ENCODE measurements at regions of chr16 and their contacts with region 1.

Region 1: DNA sequence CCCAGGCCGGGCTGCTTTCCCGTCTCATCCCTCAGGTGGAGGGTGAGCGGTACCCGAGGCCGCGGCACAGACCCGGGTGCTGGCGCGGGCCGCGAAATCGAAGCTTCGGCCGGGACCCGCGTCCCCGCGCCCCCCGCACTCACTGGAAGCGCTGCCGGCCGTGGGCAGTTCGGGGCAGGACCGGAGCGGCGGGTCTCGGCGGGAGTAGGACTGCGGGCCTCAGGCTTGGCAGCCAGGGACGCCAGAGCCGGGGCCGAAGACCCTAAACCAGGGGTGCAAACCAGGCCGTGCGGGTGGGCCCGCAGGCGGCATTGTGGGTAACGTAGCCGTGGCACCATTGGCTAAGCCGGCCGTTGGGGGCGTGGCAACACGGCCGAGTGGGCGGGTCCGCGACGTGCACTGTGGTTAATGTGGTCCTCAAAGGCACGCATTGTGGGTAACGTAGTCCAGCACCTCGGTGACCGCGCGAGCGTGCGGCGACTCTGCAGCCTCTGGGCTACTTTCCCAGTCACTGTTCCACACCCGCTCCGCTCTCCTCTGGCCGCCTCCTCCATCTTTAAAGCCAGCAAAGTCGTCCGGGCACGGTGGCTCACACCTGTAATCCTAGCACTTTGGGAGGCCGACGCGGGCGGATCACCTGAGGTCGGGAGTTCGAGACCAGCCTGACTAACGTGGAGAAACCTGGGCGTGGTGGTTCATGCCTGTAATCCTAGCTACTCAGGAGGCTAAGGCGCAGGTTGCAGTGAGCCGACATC is at the start of gene ZNF500:
- DNase-seq: peak; percentile 96
- H3K4me3 ChIP-seq: peak within 1 kb of the TSS; percentile 87
- H3K27ac ChIP-seq: peak within 1 kb of the TSS; percentile 68
- H3K4me1 ChIP-seq: peaks cover 30% of the 10 kb centered on the region
- CTCF ChIP-seq: no peak
- total RNA-seq, gene ZNF500: 12.9 and 16.1 TPM in 2 replicates

Region 2: DNA sequence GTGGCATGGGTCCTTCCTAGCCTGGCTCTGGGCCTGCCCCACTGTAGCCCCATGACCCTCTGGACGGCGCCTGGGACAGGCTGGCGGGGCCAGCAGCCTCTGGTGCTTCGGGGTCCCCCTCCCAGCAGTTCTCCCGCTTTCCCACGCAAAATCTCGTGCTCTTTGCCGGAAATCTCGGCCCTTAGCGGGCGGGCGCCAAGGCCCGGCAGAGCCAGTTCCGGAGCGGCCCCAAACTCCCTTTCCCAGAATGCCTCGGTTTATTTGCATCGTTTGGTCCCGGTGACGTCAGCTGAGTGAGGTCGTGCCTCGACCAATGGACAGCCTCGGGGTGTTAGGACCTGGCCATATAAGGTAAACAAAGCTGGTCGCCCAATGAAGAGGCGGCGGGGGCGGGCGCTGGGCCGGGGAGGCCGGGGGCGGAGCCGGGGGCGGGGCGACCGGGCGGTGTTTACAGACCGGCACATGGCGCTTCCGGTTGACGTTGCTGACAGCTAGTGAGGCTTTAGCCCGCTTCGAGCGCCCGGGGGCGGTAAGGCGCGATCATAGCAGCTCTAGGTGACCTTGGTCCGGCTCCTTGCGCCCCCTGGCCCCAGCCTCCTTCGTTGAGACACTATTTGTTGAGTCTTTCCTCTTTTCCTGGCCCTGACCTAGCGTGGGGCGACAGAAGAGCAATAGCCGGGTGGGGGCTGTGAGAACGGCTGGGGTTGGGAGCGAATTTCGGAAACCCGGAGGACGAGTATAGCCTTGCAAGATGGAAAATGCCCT is 150.8 kb before region 1 on chr16:
- CTCF ChIA-PET with region 1: no interaction called
- POLR2A ChIA-PET with region 1: no interaction called
- intact Hi-C with region 1: loop called (anchors 10 kb)
- DNase-seq: peak; percentile 100
- H3K4me3 ChIP-seq: peak overlapping the region; percentile 91
- H3K27ac ChIP-seq: peak overlapping the region; percentile 97
- H3K4me1 ChIP-seq: peaks cover 44% of the 10 kb centered on the region
- CTCF ChIP-seq: peak; percentile 73

Region 3: DNA sequence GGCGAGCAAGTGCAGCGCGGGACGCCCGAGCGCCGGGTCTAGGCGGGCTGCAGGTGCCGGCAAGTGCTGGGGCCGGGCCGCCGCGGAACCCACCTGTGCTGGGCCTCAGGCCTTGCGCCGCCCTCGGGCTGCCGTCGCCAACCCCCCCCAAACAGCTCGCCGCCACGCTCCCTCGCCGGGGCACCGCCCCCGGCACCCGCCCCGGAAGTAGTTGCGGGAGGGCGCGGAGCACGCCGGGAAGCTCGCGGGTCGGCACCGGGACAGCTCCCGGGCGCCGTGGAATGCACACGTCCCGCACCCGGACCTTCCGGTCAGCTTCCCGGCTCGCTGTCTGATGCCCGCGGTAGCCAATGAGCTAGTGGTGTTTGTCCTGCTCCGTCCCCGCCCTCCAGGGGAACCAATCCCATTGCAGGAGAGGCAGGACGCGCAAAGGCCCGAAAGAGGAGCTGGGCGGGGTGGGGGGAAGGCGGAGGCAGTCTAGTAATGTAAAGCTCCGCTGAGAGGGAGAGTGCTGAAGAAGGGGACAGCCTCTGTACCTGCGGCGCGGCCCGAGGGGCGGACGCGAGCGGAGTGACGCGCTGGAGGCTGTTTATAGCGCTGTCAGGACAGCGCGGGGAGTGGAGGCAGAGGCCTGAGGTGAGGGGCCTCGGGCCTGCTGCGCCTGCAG is 32.9 kb before region 1 on chr16 and contains the starts of genes ANKS3 and DNAAF8:
- CTCF ChIA-PET with region 1: no interaction called
- POLR2A ChIA-PET with region 1: interaction called, 23 read pairs
- intact Hi-C with region 1: no loop called
- DNase-seq: peak; percentile 82
- H3K4me3 ChIP-seq: peak within 1 kb of the TSS; percentile 89
- H3K27ac ChIP-seq: peak within 1 kb of the TSS; percentile 64
- H3K4me1 ChIP-seq: peaks cover 15% of the 10 kb centered on the region
- CTCF ChIP-seq: no peak
- total RNA-seq, gene ANKS3: 17.6 and 19.5 TPM in 2 replicates
- total RNA-seq, gene DNAAF8: 0.36 and 0.38 TPM in 2 replicates

Region 4: GRCh38 chr16:4802659-4803287 is 35.7 kb after region 1 on chr16:
- CTCF ChIA-PET with region 1: no interaction called
- POLR2A ChIA-PET with region 1: no interaction called
- intact Hi-C with region 1: loop called (anchors 1 kb)
- DNase-seq: peak; percentile 91
- H3K4me3 ChIP-seq: peak overlapping the region; percentile 78
- H3K27ac ChIP-seq: peak overlapping the region; percentile 59
- H3K4me1 ChIP-seq: peaks cover 26% of the 10 kb centered on the region
- CTCF ChIP-seq: no peak

Region 5: DNA sequence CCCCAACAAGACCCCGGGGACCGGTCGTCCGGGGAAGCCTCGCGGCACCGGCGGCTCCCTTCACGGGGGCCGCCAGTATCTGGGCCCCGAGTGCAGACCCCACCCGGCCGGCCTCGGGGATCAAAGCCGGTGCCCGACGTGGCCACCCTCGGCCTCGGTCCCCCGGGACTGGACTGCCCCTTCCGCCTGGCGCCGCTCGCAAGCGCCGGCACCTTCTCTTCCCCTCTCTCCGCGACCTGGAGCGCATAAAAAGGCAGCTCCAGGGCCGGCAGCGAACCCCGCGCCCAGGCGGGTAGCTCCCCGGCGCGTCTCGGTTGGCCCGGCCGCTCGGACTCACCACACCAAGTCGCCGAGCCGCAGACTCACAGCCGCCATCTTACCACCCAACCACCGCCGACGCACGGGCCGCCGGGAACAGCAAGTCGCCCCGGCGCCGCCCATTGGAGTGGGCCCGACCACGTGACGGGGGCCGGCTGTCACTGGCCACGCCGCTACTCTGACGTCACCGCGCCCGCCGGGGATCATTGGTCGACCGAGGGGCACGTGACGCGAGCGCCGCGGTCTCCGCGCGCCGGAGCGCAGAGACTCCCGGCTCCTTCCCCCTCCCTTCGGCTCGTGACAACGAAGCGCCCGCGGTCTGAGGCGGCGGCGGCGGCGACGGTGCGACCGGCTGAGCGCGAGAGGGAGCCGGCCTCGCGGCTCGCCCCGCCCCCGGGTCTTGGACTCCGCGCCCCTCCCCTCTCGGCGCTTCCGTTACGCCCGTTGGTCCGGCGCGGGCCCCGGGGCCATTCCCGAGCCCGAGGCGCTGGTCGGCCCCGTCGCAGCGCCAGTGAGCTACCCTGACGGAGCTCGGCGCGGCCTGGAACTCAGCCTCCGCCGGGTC is 80.1 kb after region 1 on chr16 and contains the starts of genes GLYR1 and UBN1:
- CTCF ChIA-PET with region 1: no interaction called
- POLR2A ChIA-PET with region 1: no interaction called
- intact Hi-C with region 1: loop called (anchors 2 kb)
- DNase-seq: peak; percentile 98
- H3K4me3 ChIP-seq: peak within 1 kb of the TSS; percentile 96
- H3K27ac ChIP-seq: peak within 1 kb of the TSS; percentile 74
- H3K4me1 ChIP-seq: peaks cover 38% of the 10 kb centered on the region
- CTCF ChIP-seq: no peak
- total RNA-seq, gene GLYR1: 48.4 and 54.4 TPM in 2 replicates
- total RNA-seq, gene UBN1: 35.8 and 37.2 TPM in 2 replicates

Region 6: DNA sequence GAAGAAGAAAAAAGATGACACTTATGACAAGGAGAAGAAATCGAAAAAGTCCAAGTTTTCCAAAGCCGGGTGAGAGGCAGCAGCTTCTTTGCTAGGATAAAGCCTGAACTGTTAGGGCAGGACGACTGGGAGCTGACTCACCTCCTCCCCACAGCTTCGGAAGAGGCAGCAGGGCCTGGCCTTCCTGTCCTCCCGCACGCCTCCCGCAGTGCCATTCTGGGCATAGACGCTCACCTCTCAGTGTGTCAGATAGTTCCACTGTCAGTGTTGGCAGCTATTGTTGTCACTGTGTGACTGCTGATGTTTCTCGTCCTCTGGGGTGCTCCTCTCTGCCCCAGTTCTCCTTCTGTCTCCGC is 92.8 kb after region 1 on chr16:
- CTCF ChIA-PET with region 1: no interaction called
- POLR2A ChIA-PET with region 1: no interaction called
- intact Hi-C with region 1: no loop called
- DNase-seq: no peak
- H3K4me3 ChIP-seq: no peak overlapping the region
- H3K27ac ChIP-seq: no peak overlapping the region
- H3K4me1 ChIP-seq: no peaks in the 10 kb centered on the region
- CTCF ChIP-seq: no peak

Measured in OCI-LY7 (cell line).